IMR-90 (cell line): ENCODE measurements at regions of chr3 and their contacts with region 1.

Region 1: GRCh38 chr3:151276687-151277042 is 1.7 kb downstream of the P2RY14 start:
- DNase-seq: no peak
- ATAC-seq: no peak
- H3K4me3 ChIP-seq: no peak overlapping the region
- H3K27ac ChIP-seq: no peak overlapping the region
- H3K4me1 ChIP-seq: peaks cover 2% of the 10 kb centered on the region; the same call in 1 of the 2 replicates
- H3K27me3 ChIP-seq: no peaks in the 10 kb centered on the region
- CTCF ChIP-seq: no peak
- POLR2A ChIP-seq: no peak
- RAD21 ChIP-seq: no peak

Region 2: DNA sequence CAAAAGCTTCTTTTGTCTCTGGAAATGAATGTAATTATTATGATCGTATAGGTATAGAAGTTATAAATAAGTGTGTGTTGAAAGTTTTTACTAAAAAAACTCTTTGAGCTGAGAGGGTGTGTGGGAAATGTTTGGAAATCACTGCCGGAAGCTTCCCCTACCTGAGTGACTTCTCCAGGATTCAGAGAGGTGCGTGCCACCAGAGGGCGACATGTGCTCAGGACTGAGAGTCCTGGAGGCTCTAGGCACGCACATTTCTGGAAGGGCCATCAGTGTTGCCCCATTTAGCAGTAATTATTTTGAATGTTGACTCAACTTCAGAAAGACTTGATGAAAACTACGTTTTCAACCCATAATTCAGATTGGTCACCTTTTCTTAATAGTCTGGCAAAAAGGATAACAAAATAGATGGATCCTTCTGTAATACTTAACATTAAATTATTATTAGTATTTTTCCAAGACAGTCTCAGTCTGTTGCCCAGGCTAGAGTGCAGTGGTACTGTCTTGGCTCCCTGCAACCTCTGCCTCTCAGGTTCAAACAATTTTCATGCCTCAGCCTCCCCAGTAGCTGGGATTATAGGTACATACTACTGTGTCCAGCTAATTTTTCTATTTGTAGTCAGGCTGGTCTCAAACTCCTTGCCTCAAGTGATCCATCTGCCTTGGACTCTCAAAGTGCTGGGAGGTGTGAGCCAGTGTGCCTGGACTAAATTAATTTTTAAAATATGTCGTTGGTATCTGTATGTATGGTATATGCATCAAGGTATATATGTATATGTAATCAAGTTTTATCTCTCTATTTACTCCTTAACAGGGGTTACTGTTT is 108.2 kb before region 1 on chr3:
- CTCF ChIA-PET with region 1: interaction called, 14 read pairs
- POLR2A ChIA-PET with region 1: no interaction called
- dilution Hi-C with region 1: no loop called
- in situ Hi-C with region 1: loop called (anchors 5 kb)
- intact Hi-C with region 1: no loop called
- DNase-seq: peak; percentile 67
- ATAC-seq: peak; percentile 90
- H3K4me3 ChIP-seq: no peak overlapping the region
- H3K27ac ChIP-seq: no peak overlapping the region
- H3K4me1 ChIP-seq: no peaks in the 10 kb centered on the region
- H3K27me3 ChIP-seq: no peaks in the 10 kb centered on the region
- CTCF ChIP-seq: peak; percentile 84
- POLR2A ChIP-seq: no peak
- RAD21 ChIP-seq: peak; percentile 93

Region 3: DNA sequence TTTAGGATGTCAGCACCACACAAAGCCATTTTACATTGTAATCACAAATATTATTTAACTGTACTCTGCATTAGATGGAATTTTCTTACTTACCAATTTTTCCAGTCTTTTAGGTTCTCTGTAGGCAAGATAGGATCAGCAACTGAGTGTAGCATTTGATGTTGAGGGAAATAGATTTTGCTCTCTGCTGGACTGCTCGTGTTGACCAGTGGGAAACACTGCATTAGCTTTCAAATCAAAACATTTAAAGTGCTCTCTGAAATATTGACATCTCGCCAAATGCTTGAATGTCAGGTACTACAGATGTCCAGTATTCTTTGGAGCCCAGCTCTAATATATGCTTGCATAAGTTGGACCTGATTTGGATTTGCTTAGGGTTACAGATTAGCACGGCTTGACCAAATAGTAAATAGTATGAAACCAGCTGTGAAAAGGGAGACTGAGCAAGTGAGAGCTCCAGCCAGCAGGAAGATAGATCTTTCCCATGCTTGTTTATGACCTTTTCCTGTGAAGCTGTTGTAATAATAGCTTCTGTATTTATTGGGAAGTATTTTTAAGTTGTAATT is 27.8 kb before region 1 on chr3:
- CTCF ChIA-PET with region 1: no interaction called
- POLR2A ChIA-PET with region 1: no interaction called
- dilution Hi-C with region 1: no loop called
- in situ Hi-C with region 1: no loop called
- intact Hi-C with region 1: no loop called
- DNase-seq: no peak
- ATAC-seq: no peak
- H3K4me3 ChIP-seq: no peak overlapping the region
- H3K27ac ChIP-seq: no peak overlapping the region
- H3K4me1 ChIP-seq: 0 out of 2 replicates have a peak, but pooled peaks cover 2% of the 10 kb centered on the region
- H3K27me3 ChIP-seq: no peaks in the 10 kb centered on the region
- CTCF ChIP-seq: no peak
- POLR2A ChIP-seq: no peak
- RAD21 ChIP-seq: no peak